GM12878 (cell line): ENCODE measurements at regions of chr2 and their contacts with region 1.

Region 1: GRCh38 chr2:134411828-134412638 is 158.2 kb downstream of the MGAT5 start:
- DNase-seq: peak; percentile 86
- ATAC-seq: peak; percentile 98
- H3K4me3 ChIP-seq: no peak overlapping the region
- H3K27ac ChIP-seq: peak overlapping the region; percentile 81
- H3K4me1 ChIP-seq: peaks cover 27% of the 10 kb centered on the region
- H3K27me3 ChIP-seq: no peaks in the 10 kb centered on the region
- CTCF ChIP-seq: peak; percentile 83 to 98 (median 93); a peak in 5 of 6 replicates
- EP300 ChIP-seq: peak in 1 of 2 experiments; percentile 23; a peak in 1 of 4 replicates
- POLR2A ChIP-seq: no peak
- RAD21 ChIP-seq: peak; percentile 98

Region 2: DNA sequence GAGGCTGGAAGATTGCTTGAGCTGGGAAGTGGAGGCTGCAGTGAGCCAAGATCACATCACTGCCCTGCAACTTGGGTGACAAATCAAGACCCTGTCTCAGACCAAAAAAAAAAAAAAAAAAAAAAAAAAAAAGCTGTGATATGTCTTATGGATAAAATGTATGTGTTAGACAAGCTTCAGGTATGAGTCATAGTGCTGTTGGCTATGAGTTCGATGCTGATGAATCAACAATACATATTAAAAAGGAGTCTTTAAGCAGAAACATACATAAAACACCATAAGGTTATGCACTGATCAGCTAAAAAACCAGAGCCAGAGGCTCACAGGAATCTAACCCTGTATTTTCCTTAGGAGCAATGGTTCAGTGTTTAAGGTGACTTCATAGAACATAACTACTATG is 1176.1 kb before region 1 on chr2:
- CTCF ChIA-PET with region 1: no interaction called
- POLR2A ChIA-PET with region 1: no interaction called
- RAD21 ChIA-PET with region 1: no interaction called
- SMC1A ChIA-PET with region 1: no interaction called
- in situ Hi-C with region 1: no loop called
- intact Hi-C with region 1: no loop called
- DNase-seq: no peak
- ATAC-seq: no peak
- H3K4me3 ChIP-seq: no peak overlapping the region
- H3K27ac ChIP-seq: no peak overlapping the region
- H3K4me1 ChIP-seq: no peaks in the 10 kb centered on the region
- H3K27me3 ChIP-seq: no peaks in the 10 kb centered on the region
- CTCF ChIP-seq: no peak
- EP300 ChIP-seq: no peak
- POLR2A ChIP-seq: no peak
- RAD21 ChIP-seq: no peak

Region 3: GRCh38 chr2:133886735-133887660 is 525.0 kb before region 1 on chr2:
- CTCF ChIA-PET with region 1: interaction called, 67 read pairs
- POLR2A ChIA-PET with region 1: interaction called, 3 read pairs
- RAD21 ChIA-PET with region 1: interaction called, 55 read pairs
- SMC1A ChIA-PET with region 1: interaction called, 18 read pairs
- in situ Hi-C with region 1: loop called (anchors 5 kb)
- intact Hi-C with region 1: loop called (anchors 2 kb)
- DNase-seq: peak; percentile 21
- ATAC-seq: peak; percentile 94
- H3K4me3 ChIP-seq: no peak overlapping the region
- H3K27ac ChIP-seq: no peak overlapping the region
- H3K4me1 ChIP-seq: no peaks in the 10 kb centered on the region
- H3K27me3 ChIP-seq: no peaks in the 10 kb centered on the region; a peak in 2 of 4 replicates
- CTCF ChIP-seq: peak; percentile 57 to 76 (median 70); a peak in 5 of 6 replicates
- EP300 ChIP-seq: no peak
- POLR2A ChIP-seq: no peak
- RAD21 ChIP-seq: peak; percentile 84

Region 4: GRCh38 chr2:134207564-134208209 is 204.3 kb before region 1 on chr2:
- CTCF ChIA-PET with region 1: interaction called, 46 read pairs
- POLR2A ChIA-PET with region 1: no interaction called
- RAD21 ChIA-PET with region 1: interaction called, 36 read pairs
- SMC1A ChIA-PET with region 1: interaction called, 21 read pairs
- in situ Hi-C with region 1: no loop called
- intact Hi-C with region 1: no loop called
- DNase-seq: no peak
- ATAC-seq: peak; percentile 99
- H3K4me3 ChIP-seq: no peak overlapping the region
- H3K27ac ChIP-seq: no peak overlapping the region
- H3K4me1 ChIP-seq: peaks cover 33% of the 10 kb centered on the region
- H3K27me3 ChIP-seq: no peaks in the 10 kb centered on the region
- CTCF ChIP-seq: peak; percentile 75 to 79 (median 78)
- EP300 ChIP-seq: no peak
- POLR2A ChIP-seq: no peak
- RAD21 ChIP-seq: peak; percentile 88

Region 5: DNA sequence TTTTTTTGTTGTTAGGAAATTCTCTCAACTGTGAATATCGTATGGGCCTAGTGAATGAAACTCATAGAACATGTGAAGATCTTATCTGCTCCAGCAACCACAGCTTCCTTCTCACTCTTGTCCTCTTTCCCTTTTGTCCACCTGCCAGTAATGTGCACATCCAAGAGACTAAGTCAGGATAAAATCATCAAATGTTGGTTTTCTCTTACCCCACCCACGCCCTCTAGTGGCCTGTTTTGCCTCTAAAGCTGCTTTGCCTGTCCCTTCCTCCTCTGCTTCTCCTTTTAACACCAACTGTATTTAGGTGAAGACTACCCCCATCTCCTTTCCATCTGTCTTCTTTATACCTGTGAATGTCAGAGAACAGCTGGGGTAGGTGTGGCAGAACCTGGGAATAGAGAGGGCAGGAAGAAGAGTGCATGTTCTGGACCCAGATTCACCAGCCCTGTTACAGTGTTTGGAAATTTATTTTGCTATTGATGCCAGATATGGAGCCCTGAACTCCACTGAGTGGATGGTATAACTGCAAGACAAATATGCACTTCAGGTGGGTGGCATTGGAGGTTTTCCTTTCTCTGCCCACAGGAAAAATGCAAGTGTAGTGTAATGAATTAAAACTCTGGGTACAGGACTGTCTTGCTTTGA is 166.6 kb before region 1 on chr2:
- CTCF ChIA-PET with region 1: interaction called, 60 read pairs
- POLR2A ChIA-PET with region 1: interaction called, 6 read pairs
- RAD21 ChIA-PET with region 1: interaction called, 55 read pairs
- SMC1A ChIA-PET with region 1: interaction called, 45 read pairs
- in situ Hi-C with region 1: no loop called
- intact Hi-C with region 1: loop called (anchors 1 kb)
- DNase-seq: no peak
- ATAC-seq: peak; percentile 65
- H3K4me3 ChIP-seq: no peak overlapping the region; the same call in 1 of the 2 replicates
- H3K27ac ChIP-seq: peak overlapping the region; percentile 54
- H3K4me1 ChIP-seq: peaks cover 66% of the 10 kb centered on the region
- H3K27me3 ChIP-seq: no peaks in the 10 kb centered on the region
- CTCF ChIP-seq: peak; percentile 78 to 86 (median 80)
- EP300 ChIP-seq: no peak
- POLR2A ChIP-seq: no peak
- RAD21 ChIP-seq: peak; percentile 75

Region 6: DNA sequence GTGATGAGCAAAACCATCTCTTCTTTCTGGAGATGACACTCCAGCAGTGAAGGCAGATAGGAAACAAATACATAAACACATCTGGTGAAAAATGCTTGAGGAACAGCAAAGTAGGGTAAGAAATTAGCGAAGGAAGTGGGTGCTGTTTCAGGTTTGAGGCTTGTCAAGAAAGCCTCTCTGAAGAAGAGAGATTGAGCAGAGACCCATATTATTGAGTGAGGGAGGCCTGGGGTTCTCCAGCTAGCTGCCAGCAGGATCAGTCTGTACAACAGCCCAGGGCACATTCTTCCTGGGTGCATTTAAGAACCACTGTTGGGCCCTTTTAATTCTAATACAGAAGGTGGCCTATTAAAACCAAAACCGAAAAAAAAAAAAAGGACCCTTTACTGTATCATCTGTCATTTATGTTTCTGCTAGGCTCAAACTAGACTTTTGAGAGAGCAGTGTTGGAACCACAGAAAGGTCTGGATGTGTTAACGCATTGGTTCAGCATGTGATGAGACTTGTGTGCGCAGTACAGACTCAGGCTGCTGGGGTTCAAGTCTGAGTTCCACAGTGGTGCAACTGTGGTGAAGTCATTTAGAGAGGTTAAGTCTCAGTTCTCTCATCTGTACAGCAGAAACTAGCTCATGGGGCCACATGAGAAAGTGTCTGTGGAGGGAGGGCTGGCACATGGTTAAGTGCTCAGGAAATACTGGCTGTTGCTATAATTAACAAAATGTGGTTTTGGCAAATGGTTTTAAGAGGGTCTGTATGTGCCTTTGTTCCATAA is 129.2 kb before region 1 on chr2:
- CTCF ChIA-PET with region 1: interaction called, 13 read pairs
- POLR2A ChIA-PET with region 1: interaction called, 4 read pairs
- RAD21 ChIA-PET with region 1: interaction called, 27 read pairs
- SMC1A ChIA-PET with region 1: interaction called, 22 read pairs
- in situ Hi-C with region 1: no loop called
- intact Hi-C with region 1: loop called (anchors 2 kb)
- DNase-seq: peak; percentile 96
- ATAC-seq: peak; percentile 91
- H3K4me3 ChIP-seq: peak overlapping the region; percentile 47
- H3K27ac ChIP-seq: peak overlapping the region; percentile 95
- H3K4me1 ChIP-seq: peaks cover 87% of the 10 kb centered on the region
- H3K27me3 ChIP-seq: no peaks in the 10 kb centered on the region
- CTCF ChIP-seq: no peak
- EP300 ChIP-seq: peak; percentile 89 to 90
- POLR2A ChIP-seq: 0 out of 2 replicates have a peak, but pooled peaks have one; percentile 40
- RAD21 ChIP-seq: no peak

Region 7: GRCh38 chr2:134365356-134365755 is 46.7 kb before region 1 on chr2:
- CTCF ChIA-PET with region 1: interaction called, 14 read pairs
- POLR2A ChIA-PET with region 1: no interaction called
- RAD21 ChIA-PET with region 1: interaction called, 5 read pairs
- SMC1A ChIA-PET with region 1: interaction called, 8 read pairs
- in situ Hi-C with region 1: no loop called
- intact Hi-C with region 1: no loop called
- DNase-seq: no peak
- ATAC-seq: peak; percentile 31; the same call in 1 of the 3 replicates
- H3K4me3 ChIP-seq: no peak overlapping the region
- H3K27ac ChIP-seq: no peak overlapping the region
- H3K4me1 ChIP-seq: peaks cover 18% of the 10 kb centered on the region
- H3K27me3 ChIP-seq: no peaks in the 10 kb centered on the region
- CTCF ChIP-seq: peak in 2 of 3 experiments; percentile 9 to 12; a peak in 1 of 6 replicates
- EP300 ChIP-seq: no peak
- POLR2A ChIP-seq: no peak
- RAD21 ChIP-seq: peak; percentile 25; the same call in 1 of the 2 replicates

Region 8: GRCh38 chr2:134564549-134564948 is 152.5 kb after region 1 on chr2:
- CTCF ChIA-PET with region 1: no interaction called
- POLR2A ChIA-PET with region 1: no interaction called
- RAD21 ChIA-PET with region 1: no interaction called
- SMC1A ChIA-PET with region 1: no interaction called
- in situ Hi-C with region 1: no loop called
- intact Hi-C with region 1: no loop called
- DNase-seq: no peak
- ATAC-seq: peak; percentile 68
- H3K4me3 ChIP-seq: no peak overlapping the region
- H3K27ac ChIP-seq: no peak overlapping the region
- H3K4me1 ChIP-seq: peaks cover 5% of the 10 kb centered on the region; the same call in 1 of the 2 replicates
- H3K27me3 ChIP-seq: peaks cover 0 to under 1% of the 10 kb centered on the region in 2 experiments; a peak in 1 of 4 replicates
- CTCF ChIP-seq: no peak
- EP300 ChIP-seq: no peak
- POLR2A ChIP-seq: no peak
- RAD21 ChIP-seq: no peak

Region 9: DNA sequence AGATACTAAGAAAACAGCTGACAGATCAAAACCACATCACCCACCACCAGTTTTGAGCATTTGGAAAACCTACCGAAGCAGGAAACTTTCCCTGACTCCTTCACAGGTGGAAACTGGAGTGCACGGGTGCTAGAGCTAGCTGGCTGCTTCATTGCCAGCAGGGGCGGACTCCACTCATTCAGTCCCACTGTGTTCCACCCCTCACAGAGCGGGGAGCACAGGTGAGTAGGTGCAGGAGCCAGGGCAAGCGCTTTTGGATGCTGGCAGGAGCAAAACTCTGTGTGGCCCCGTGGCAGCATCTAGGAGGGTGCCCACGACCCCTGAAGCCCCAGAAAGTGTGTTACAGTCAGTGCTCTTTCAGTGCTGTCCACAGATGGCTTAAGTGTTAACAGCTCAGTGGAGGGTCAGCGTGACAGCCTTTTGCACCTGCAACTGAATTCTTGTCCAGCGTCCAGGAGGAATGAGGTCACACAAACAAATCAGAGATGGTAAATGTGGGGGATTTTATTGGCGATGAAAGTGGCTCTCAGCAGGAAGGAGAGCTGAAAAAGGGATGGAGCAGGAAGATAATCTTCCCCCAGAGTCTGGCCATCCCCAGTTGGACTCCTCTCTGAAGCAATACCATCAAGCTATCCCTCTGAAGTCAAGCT is 235.7 kb after region 1 on chr2:
- CTCF ChIA-PET with region 1: no interaction called
- POLR2A ChIA-PET with region 1: no interaction called
- RAD21 ChIA-PET with region 1: no interaction called
- SMC1A ChIA-PET with region 1: no interaction called
- in situ Hi-C with region 1: no loop called
- intact Hi-C with region 1: no loop called
- DNase-seq: no peak
- ATAC-seq: no peak
- H3K4me3 ChIP-seq: no peak overlapping the region
- H3K27ac ChIP-seq: no peak overlapping the region
- H3K4me1 ChIP-seq: peaks cover under 1% of the 10 kb centered on the region; the same call in 1 of the 2 replicates
- H3K27me3 ChIP-seq: no peaks in the 10 kb centered on the region
- CTCF ChIP-seq: no peak
- EP300 ChIP-seq: no peak
- POLR2A ChIP-seq: no peak
- RAD21 ChIP-seq: no peak